Head of caudate nucleus (tissue), 42 donors: ENCODE measurements at regions of chr5 and their contacts with region 1.

Region 1: GRCh38 chr5:134637161-134637582 is 4.5 kb upstream of the SAR1B start:
- DNase-seq: no peak

Region 2: DNA sequence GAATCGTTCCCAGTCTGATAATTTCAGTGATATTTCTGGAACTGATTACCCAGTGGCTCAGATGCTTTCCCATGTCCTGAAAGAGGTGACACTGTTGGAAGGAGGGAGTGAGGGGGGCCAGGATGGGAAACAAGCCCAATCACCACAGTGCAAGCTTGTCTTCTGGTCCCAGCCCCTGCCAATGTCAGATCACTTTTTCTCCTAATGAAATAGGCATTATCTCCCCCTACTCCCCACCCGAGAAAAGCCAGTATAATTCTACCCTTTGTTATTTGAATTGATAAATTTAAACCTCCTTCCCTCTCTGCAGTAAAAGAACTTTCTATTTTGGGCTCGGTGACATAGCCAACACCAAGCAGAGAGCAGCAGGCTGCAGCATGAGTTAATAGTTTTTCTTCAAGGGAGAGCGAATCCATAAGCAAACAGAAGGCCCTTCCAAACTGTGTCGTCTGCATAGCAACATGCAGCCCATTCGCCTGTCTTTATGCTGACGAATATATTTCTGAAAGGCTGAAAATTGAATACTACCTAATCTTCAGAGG is 396.7 kb before region 1 on chr5:
- intact Hi-C with region 1: no loop called
- DNase-seq: peak; percentile 7 to 80 (median 60)

Region 3: DNA sequence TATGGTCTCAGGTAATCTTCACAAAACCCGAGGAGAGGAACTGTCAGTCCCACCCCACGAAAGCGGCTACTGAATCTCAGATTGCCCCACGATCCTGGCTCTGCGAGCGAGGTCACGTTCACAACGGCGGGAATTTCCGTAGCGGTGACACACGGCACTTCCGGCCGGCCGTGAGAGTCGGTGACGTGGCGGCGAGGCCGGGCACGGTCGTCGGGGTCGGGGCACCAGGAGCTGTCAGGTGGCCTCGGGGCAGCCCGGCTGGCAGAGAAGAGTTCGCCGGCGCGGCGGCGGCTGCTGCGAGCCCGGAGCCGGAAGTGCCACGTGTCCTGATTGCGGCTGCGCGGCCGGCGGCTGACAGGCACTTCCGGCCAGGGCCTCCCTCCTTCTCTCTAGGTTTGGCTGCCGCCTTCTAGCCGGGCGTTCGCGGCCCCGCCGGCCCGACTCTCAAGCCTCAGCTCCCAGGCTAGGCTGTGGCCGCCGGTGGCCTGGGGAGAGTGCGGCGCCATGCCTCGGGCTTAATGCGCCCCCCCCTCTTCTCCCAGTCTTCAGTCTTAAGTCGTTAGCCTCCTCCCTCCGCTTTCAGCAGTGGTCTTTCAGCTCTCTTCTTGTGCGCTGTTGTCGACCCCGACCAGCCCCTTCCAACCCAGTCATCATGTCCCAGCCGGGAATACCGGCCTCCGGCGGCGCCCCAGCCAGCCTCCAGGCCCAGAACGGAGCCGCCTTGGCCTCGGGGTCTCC is 11.4 kb after region 1 on chr5 and contains the start of gene SEC24A:
- intact Hi-C with region 1: loop called (anchors 2 kb)
- DNase-seq: peak; percentile 60 to 93 (median 85)